Ascending aorta (tissue), 2 donors: ENCODE measurements at regions of chr21 and their contacts with region 1.

Region 1: DNA sequence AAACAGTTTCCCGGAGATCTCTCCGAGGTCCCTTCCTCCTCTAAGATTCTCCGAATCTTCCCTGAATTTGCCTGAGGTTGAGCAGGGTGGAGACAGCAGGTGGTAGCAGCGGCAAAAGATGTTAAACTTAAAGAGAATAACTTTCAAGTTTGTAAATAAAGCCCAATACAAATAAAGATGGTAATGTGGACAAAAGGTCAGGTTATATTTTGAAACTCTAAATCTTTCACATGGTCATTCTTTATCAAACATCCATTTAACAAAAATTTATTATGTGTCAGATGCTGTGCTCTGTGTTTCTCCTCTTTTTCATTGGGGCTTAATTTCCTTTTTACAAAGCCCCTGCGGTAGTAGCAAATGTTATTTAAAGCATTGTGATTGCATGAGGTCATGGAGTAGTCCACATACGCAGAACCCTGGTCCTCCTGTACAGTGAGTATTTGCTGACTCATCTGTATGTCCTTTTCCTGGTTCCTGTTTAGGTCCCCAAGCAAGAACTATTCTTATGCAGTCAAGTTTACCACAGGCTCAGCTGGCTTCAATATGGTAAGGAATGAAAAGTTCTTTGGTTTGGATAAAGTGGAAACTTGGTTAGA is 119.2 kb downstream of the ITSN1 start:
- DNase-seq: peak in 1 of 2 donors; percentile 66
- H3K4me3 ChIP-seq: peak overlapping the region in 1 of 2 donors; percentile 44
- H3K27ac ChIP-seq: peak overlapping the region; percentile 77 to 80
- H3K4me1 ChIP-seq: peaks cover 4 to 15% of the 10 kb centered on the region in 2 donors
- H3K27me3 ChIP-seq: no peaks in the 10 kb centered on the region
- CTCF ChIP-seq: no peak

Region 2: GRCh38 chr21:33801424-33802420 is 40.2 kb after region 1 on chr21:
- intact Hi-C with region 1: loop called (anchors 5 kb)
- DNase-seq: no peak
- H3K4me3 ChIP-seq: no peak overlapping the region
- H3K27ac ChIP-seq: peak overlapping the region; percentile 52 to 58
- H3K4me1 ChIP-seq: peaks cover 0 to 12% of the 10 kb centered on the region in 2 donors
- H3K27me3 ChIP-seq: no peaks in the 10 kb centered on the region
- CTCF ChIP-seq: no peak

Region 3: GRCh38 chr21:33947451-33948095 is 186.0 kb after region 1 on chr21:
- intact Hi-C with region 1: no loop called
- DNase-seq: peak; percentile 79 to 91
- H3K4me3 ChIP-seq: peak overlapping the region; percentile 35 to 54
- H3K27ac ChIP-seq: peak overlapping the region; percentile 51 to 64
- H3K4me1 ChIP-seq: peaks cover 5 to 12% of the 10 kb centered on the region in 2 donors
- H3K27me3 ChIP-seq: no peaks in the 10 kb centered on the region
- CTCF ChIP-seq: no peak